SK-N-SH (cell line): ENCODE measurements at regions of chr2 and their contacts with region 1.

Region 1: GRCh38 chr2:69914170-69914960 is 544 bp upstream of the MXD1 start:
- DNase-seq: peak; percentile 93
- H3K4me3 ChIP-seq: peak overlapping the region; percentile 68 to 80
- H3K27ac ChIP-seq: peak overlapping the region; percentile 88 to 93
- H3K4me1 ChIP-seq: peaks cover 2 to 7% of the 10 kb centered on the region in 2 experiments; a peak in 3 of 4 replicates
- H3K27me3 ChIP-seq: no peaks in the 10 kb centered on the region
- CTCF ChIP-seq: no peak; the same call in 1 of the 2 replicates
- EP300 ChIP-seq: no peak
- RAD21 ChIP-seq: peak; percentile 38; the same call in 1 of the 2 replicates

Region 2: DNA sequence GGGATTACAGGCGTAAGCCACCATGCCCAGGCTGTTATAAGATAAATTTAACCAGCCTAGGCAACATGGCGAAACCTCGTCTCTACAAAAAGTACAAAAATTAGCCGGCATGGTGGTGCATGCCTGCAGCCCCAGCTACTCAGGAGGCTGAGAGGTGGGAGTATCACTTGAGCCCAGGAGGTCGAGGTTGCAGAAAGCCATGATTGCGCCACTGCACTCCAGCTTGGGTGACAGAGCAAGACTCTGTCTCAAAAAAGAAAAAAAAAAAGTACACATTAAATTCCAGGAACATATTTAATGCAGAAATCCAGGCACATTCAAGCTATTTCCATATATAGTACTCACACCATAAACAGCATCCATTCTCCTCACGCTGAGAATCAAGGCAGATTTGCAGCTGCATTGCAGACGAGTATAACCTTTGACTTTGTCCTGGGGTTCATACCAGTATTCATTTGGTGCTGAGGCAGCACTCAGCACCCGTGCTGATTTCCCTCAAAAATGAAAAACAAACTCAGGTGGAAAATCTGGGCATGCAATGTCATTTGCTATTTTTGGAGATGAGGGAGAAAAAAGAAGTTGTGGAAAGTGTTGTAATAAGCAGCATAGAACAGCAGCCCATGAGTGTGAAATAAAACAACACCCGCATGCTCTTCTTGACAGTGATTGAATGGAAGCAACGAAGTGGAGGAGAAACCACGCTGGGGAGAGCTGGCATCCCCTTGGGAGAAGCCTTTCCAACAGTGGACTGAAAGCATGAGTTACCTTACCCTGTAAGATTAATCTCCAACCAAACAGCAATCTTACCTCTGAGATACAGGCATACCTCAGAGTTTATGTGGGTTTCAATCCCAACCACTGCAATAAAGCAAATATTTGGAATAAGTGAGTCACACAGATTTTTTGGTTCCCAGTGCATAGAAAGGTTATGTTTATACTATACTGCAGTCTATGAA is 219.2 kb before region 1 on chr2:
- CTCF ChIA-PET with region 1: no interaction called
- POLR2A ChIA-PET with region 1: no interaction called
- DNase-seq: no peak
- H3K4me3 ChIP-seq: no peak overlapping the region
- H3K27ac ChIP-seq: no peak overlapping the region; a peak in 1 of 4 replicates
- H3K4me1 ChIP-seq: no peaks in the 10 kb centered on the region
- H3K27me3 ChIP-seq: no peaks in the 10 kb centered on the region
- CTCF ChIP-seq: no peak
- EP300 ChIP-seq: no peak
- RAD21 ChIP-seq: no peak

Region 3: GRCh38 chr2:69933254-69933828 is 19.0 kb after region 1 on chr2:
- CTCF ChIA-PET with region 1: no interaction called
- POLR2A ChIA-PET with region 1: no interaction called
- DNase-seq: no peak
- H3K4me3 ChIP-seq: no peak overlapping the region
- H3K27ac ChIP-seq: peak overlapping the region in 1 of 2 experiments; percentile 73; a peak in 2 of 4 replicates
- H3K4me1 ChIP-seq: peaks cover 0 to 5% of the 10 kb centered on the region in 2 experiments; a peak in 1 of 4 replicates
- H3K27me3 ChIP-seq: no peaks in the 10 kb centered on the region
- CTCF ChIP-seq: no peak
- EP300 ChIP-seq: no peak
- RAD21 ChIP-seq: no peak

Region 4: DNA sequence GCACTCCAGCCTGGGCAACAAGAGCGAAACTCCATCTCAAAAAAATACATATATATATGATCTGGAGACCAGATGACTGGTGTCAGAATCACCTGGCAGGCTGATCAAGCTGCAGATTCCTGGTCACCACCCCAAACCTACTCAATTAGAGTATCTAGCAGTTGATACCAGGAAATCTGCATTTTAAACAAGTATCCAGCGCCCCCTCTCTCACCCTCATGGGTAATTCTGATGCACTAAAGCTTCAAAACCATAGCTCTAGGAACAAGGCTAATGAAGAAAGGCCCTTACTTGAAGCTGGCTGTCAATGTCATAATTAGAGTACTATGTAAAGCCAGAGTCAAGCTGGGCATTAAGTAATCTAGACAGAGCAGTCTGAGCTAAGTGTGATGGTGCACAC is 147.9 kb after region 1 on chr2:
- CTCF ChIA-PET with region 1: interaction called, 74 read pairs
- POLR2A ChIA-PET with region 1: interaction called, 5 read pairs
- DNase-seq: no peak
- H3K4me3 ChIP-seq: no peak overlapping the region
- H3K27ac ChIP-seq: no peak overlapping the region
- H3K4me1 ChIP-seq: no peaks in the 10 kb centered on the region
- H3K27me3 ChIP-seq: no peaks in the 10 kb centered on the region
- CTCF ChIP-seq: no peak
- EP300 ChIP-seq: no peak
- RAD21 ChIP-seq: no peak

Region 5: GRCh38 chr2:70086838-70087701 is 172.7 kb after region 1 on chr2 and contains the start of gene PCBP1:
- CTCF ChIA-PET with region 1: interaction called, 14 read pairs
- POLR2A ChIA-PET with region 1: interaction called, 20 read pairs
- DNase-seq: peak; percentile 99
- H3K4me3 ChIP-seq: peak within 1 kb of the TSS; percentile 85 to 97
- H3K27ac ChIP-seq: peak within 1 kb of the TSS; percentile 100
- H3K4me1 ChIP-seq: peaks cover 21 to 29% of the 10 kb centered on the region in 2 experiments; a peak in 3 of 4 replicates
- H3K27me3 ChIP-seq: no peaks in the 10 kb centered on the region
- CTCF ChIP-seq: no peak
- EP300 ChIP-seq: no peak
- RAD21 ChIP-seq: no peak
- polyA plus RNA-seq, gene PCBP1: 60.7 and 94.0 TPM in 2 replicates

Region 6: DNA sequence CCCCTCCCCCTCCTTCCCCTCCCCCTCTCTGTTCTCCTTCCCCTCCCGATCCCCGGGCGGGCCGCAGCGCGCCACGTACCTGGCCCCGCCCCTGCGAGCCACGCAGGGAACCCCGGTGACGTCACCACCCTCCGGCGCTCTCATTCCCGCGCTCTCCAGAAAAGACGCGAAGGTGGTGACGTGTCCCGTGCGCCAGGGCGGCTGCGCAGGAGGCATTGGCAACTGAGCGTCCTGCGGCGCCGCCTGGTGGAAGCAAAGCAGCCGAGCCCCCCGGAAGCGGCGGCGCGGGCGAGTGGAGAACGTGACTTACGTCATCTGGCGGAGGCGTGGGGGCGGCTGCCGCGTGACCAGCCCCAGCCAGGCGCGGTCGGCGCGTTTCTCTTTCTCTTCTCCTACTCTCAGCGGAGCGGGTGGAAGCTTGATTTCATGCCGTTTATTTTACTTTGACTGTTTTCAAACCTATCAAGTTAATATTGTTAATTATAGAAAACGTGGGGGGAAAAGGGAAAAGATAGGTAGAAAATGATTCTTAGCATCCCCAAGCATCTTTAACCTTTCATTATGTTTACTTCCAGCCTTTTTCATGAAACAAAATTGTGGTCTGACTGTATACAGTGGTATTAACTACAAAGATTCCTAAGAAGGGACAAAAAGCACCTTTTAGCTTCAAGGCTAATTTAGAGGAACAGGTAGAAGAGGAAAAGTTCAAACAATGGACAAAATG is 228.4 kb after region 1 on chr2:
- CTCF ChIA-PET with region 1: interaction called, 20 read pairs
- POLR2A ChIA-PET with region 1: interaction called, 38 read pairs
- DNase-seq: peak; percentile 99
- H3K4me3 ChIP-seq: peak overlapping the region; percentile 56 to 67
- H3K27ac ChIP-seq: peak overlapping the region; percentile 92 to 96
- H3K4me1 ChIP-seq: peaks cover 13 to 20% of the 10 kb centered on the region in 2 experiments; a peak in 3 of 4 replicates
- H3K27me3 ChIP-seq: no peaks in the 10 kb centered on the region
- CTCF ChIP-seq: peak; percentile 84
- EP300 ChIP-seq: peak in 1 of 2 experiments; percentile 91; a peak in 2 of 4 replicates
- RAD21 ChIP-seq: peak; percentile 86

Region 7: DNA sequence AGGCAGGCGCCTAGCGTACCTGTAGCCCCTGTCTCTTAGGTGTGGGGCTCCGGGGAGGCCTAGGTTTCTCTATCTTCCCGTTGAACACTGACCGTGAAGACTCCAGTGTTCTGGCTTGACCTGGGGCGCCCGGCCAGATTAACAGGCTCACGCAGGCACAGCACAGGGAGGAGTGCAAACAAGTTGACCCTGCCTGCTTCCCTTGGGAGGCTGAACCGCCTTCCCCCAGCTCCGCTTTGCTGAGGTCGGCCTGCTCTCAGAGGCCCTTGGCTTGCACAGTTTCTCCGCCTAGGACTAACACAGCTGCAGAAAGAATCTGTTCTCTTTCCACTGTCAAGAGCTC is 344.1 kb after region 1 on chr2:
- CTCF ChIA-PET with region 1: no interaction called
- POLR2A ChIA-PET with region 1: interaction called, 10 read pairs
- DNase-seq: peak; percentile 56
- H3K4me3 ChIP-seq: peak overlapping the region; percentile 69 to 79
- H3K27ac ChIP-seq: peak overlapping the region; percentile 7 to 84; a peak in 3 of 4 replicates
- H3K4me1 ChIP-seq: peaks cover 0 to 8% of the 10 kb centered on the region in 2 experiments; a peak in 2 of 4 replicates
- H3K27me3 ChIP-seq: no peaks in the 10 kb centered on the region
- CTCF ChIP-seq: no peak
- EP300 ChIP-seq: no peak
- RAD21 ChIP-seq: no peak